Astrocyte of the cerebellum (primary cell): ENCODE measurements at regions of chr14 and their contacts with region 1.

Region 1: GRCh38 chr14:62158779-62159178 is 396.6 kb downstream of the SNAPC1 start:
- DNase-seq: no peak
- H3K4me3 ChIP-seq: no peak overlapping the region
- CTCF ChIP-seq: no peak

Region 2: DNA sequence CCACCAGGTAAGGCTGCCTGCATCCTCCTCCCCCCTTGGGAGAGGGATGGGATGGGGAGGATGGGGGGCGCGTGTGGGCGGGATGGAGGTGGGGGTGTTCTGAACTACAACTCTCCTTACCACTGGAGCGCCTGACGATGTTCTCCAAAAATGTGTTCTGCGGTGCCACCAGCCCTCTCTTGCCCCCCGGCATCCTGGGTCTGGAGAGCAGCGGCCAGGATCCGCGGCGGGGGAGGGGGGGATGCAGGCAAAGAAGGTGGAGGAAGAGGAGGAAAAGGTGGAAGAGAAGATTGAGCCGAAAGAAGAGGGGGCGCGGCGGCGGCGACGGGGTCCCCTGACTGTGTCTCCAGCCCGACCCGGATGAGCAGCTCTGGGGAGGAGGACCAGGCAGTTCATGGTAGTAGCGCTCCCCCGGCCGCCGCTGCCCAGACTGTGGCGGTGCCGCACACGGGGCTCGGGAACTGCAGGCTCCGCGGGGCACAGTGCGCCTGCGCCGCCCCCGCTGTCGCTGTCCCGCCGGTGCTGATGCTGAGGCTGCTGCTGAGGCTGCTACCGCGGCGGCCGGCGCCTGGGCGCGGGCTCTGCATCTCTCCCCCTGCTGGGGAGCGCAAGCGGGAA is 886.3 kb after region 1 on chr14 and contains the start of gene KCNH5:
- in situ Hi-C with region 1: loop called (anchors 10 kb)
- DNase-seq: no peak
- H3K4me3 ChIP-seq: peak within 1 kb of the TSS; percentile 43
- CTCF ChIP-seq: no peak